HepG2 (cell line): ENCODE measurements at regions of chr9 and their contacts with region 1.

Region 1: DNA sequence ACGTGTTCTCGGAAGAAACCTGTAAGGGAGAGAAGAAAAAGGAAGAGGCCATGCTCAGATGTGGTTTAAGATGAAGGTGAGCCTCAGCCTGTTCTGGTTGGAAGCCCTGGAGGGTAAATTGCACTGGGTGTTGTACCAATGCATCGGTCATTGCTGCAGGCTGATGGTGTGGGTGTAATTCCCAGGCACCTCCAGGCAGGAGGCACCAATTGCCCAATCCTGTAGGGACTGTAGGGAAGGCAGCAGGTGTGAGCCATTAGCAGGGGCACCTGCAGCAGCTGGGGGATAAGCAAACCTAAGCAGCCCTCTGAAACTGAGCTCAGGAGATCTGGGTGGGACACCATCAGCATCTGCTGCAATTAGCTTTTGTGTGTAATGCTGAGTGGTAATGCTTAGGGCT is 190.1 kb upstream of the TBC1D2 start:
- DNase-seq: no peak
- ATAC-seq: no peak
- H3K4me3 ChIP-seq: no peak overlapping the region
- H3K27ac ChIP-seq: no peak overlapping the region
- H3K4me1 ChIP-seq: no peaks in the 10 kb centered on the region
- H3K27me3 ChIP-seq: peaks cover 0 to 1% of the 10 kb centered on the region in 2 experiments; a peak in 2 of 5 replicates
- CTCF ChIP-seq: no peak
- EP300 ChIP-seq: no peak
- POLR2A ChIP-seq: no peak
- RAD21 ChIP-seq: no peak

Region 2: GRCh38 chr9:98380065-98380681 is 65.4 kb before region 1 on chr9:
- CTCF ChIA-PET with region 1: no interaction called
- POLR2A ChIA-PET with region 1: no interaction called
- in situ Hi-C with region 1: no loop called
- intact Hi-C with region 1: no loop called
- DNase-seq: no peak
- ATAC-seq: peak; percentile 45
- H3K4me3 ChIP-seq: no peak overlapping the region
- H3K27ac ChIP-seq: no peak overlapping the region
- H3K4me1 ChIP-seq: no peaks in the 10 kb centered on the region
- H3K27me3 ChIP-seq: peaks cover 0 to 11% of the 10 kb centered on the region in 2 experiments; a peak in 1 of 5 replicates
- CTCF ChIP-seq: no peak
- EP300 ChIP-seq: no peak
- POLR2A ChIP-seq: no peak
- RAD21 ChIP-seq: no peak

Region 3: DNA sequence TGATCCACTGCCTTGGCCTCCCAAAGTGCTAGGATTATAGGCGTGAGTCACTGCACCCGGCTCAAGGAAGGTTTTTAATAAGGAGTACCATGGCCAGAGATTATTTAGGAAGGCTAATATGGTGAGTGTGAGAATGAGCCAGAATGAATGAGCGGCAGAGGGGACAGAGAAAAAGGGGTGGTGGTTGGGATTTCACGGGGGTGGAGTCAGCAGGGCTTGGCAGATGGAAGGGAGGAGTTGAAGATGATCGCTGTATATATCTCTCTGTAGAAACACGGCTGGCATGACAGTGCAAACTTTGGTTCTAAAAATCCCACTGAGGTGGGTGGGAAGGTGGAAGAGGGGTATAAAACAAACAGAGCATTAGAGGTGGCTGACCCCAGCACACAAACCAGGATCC is 13.4 kb before region 1 on chr9:
- CTCF ChIA-PET with region 1: no interaction called
- POLR2A ChIA-PET with region 1: no interaction called
- in situ Hi-C with region 1: no loop called
- intact Hi-C with region 1: loop called (anchors 1 kb)
- DNase-seq: no peak
- ATAC-seq: no peak
- H3K4me3 ChIP-seq: no peak overlapping the region
- H3K27ac ChIP-seq: no peak overlapping the region
- H3K4me1 ChIP-seq: no peaks in the 10 kb centered on the region
- H3K27me3 ChIP-seq: no peaks in the 10 kb centered on the region; a peak in 1 of 5 replicates
- CTCF ChIP-seq: no peak
- EP300 ChIP-seq: no peak
- POLR2A ChIP-seq: no peak
- RAD21 ChIP-seq: no peak

Region 4: GRCh38 chr9:98523231-98523896 is 77.8 kb after region 1 on chr9:
- CTCF ChIA-PET with region 1: no interaction called
- POLR2A ChIA-PET with region 1: no interaction called
- in situ Hi-C with region 1: no loop called
- intact Hi-C with region 1: no loop called
- DNase-seq: no peak
- ATAC-seq: peak; percentile 67
- H3K4me3 ChIP-seq: no peak overlapping the region
- H3K27ac ChIP-seq: no peak overlapping the region
- H3K4me1 ChIP-seq: no peaks in the 10 kb centered on the region
- H3K27me3 ChIP-seq: no peaks in the 10 kb centered on the region
- CTCF ChIP-seq: peak; percentile 44
- EP300 ChIP-seq: no peak
- POLR2A ChIP-seq: no peak
- RAD21 ChIP-seq: no peak

Region 5: GRCh38 chr9:99921875-99922710 is 1476.6 kb after region 1 on chr9:
- CTCF ChIA-PET with region 1: no interaction called
- POLR2A ChIA-PET with region 1: no interaction called
- in situ Hi-C with region 1: no loop called
- intact Hi-C with region 1: loop called (anchors 5 kb)
- DNase-seq: no peak
- ATAC-seq: no peak
- H3K4me3 ChIP-seq: no peak overlapping the region
- H3K27ac ChIP-seq: no peak overlapping the region
- H3K4me1 ChIP-seq: no peaks in the 10 kb centered on the region
- H3K27me3 ChIP-seq: no peaks in the 10 kb centered on the region
- CTCF ChIP-seq: no peak
- EP300 ChIP-seq: no peak
- POLR2A ChIP-seq: no peak
- RAD21 ChIP-seq: no peak